Activated CD8-positive, alpha-beta T cell treated with anti-CD3 and anti-CD28 coated beads for 36 hours (primary cell): ENCODE measurements at regions of chr4 and their contacts with region 1.

Region 1: GRCh38 chr4:77358315-77358928 is 201.4 kb downstream of the CCNG2 start:
- DNase-seq: peak; percentile 13
- ATAC-seq: peak; percentile 62
- H3K4me3 Mint-ChIP-seq: no peak overlapping the region
- H3K27ac Mint-ChIP-seq: no peak overlapping the region
- H3K4me1 Mint-ChIP-seq: no peaks in the 10 kb centered on the region
- H3K27me3 Mint-ChIP-seq: peaks cover 4% of the 10 kb centered on the region
- CTCF ChIP-seq: peak; percentile 72

Region 2: DNA sequence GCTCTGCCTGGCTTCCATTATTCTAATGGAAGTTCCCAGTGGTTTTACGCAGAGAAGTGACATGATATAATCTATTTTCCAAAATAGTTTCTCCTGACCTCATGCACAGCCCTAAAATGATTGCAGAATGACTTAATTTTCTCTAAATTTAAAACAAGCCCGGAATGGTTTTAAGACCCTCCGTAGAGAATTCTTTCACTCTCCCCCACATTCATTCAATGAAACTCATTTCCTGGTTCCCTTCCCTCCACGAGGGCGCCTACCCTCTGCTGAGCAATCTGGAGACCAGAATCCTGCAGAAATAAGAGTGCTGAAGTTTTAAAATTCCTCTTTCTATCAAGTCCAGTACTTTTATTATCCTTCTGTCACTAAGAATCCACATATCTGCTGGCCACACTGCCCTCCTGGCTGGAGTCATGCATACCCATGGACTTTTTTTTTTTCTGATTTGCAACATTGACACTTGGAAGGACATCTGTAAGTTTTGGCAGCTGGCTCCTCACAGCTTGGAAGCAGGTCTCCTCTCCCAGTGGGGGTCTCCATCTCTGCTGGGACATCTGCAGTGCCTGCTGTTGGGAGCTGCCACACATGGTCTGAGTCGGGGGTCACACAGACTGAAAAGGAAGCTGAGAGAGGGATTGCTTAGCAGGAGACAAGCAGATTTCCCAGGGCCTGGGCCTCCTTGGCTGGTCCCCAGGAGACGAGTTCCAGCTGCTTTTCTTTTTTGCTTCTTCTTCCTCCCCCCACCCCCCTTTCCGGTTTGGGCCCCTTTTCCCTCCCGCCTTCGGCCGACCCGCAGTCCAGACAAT is 546.6 kb before region 1 on chr4:
- CTCF ChIA-PET with region 1: no interaction called
- POLR2A ChIA-PET with region 1: no interaction called
- intact Hi-C with region 1: no loop called
- DNase-seq: no peak
- ATAC-seq: no peak
- H3K4me3 Mint-ChIP-seq: no peak overlapping the region
- H3K27ac Mint-ChIP-seq: no peak overlapping the region
- H3K4me1 Mint-ChIP-seq: no peaks in the 10 kb centered on the region
- H3K27me3 Mint-ChIP-seq: no peaks in the 10 kb centered on the region
- CTCF ChIP-seq: no peak

Region 3: DNA sequence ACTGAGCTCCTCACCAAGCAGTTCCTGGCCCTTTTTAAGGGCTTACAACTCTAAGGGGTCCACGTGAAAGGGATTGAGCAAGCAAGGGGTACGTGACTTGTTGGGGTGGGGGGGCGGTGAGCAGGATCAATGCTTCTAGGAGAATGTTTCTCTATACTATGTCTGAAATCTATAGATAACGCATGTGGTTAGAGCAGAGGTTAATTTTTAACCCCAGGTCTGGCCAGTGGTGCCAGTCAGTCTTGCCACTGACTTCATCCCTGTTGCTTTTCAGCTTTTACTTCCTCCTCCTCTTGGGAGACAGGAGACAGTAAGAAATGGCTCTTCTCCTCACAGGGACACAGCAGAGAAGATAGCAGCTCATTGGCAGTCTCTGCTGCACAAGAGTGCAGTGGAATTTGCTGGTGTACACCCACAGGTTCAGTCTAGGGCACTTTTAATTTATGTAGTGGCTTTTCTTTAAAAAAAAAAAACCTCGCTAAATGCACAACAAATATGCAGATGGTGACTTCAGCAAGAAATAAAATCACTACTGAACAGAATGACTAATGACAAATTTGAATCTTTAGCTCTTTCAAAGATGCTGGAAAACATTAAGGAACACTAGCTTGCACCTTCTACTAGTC is 11.0 kb before region 1 on chr4:
- CTCF ChIA-PET with region 1: interaction called, 17 read pairs
- POLR2A ChIA-PET with region 1: no interaction called
- intact Hi-C with region 1: no loop called
- DNase-seq: no peak
- ATAC-seq: no peak
- H3K4me3 Mint-ChIP-seq: no peak overlapping the region
- H3K27ac Mint-ChIP-seq: no peak overlapping the region
- H3K4me1 Mint-ChIP-seq: no peaks in the 10 kb centered on the region
- H3K27me3 Mint-ChIP-seq: peaks cover 3% of the 10 kb centered on the region
- CTCF ChIP-seq: no peak